KBM-7 (cell line): ENCODE measurements at regions of chr17 and their contacts with region 1.

Region 1: GRCh38 chr17:66727639-66728570 is 107.0 kb upstream of the CACNG5 start:
- DNase-seq: peak; percentile 70

Region 2: DNA sequence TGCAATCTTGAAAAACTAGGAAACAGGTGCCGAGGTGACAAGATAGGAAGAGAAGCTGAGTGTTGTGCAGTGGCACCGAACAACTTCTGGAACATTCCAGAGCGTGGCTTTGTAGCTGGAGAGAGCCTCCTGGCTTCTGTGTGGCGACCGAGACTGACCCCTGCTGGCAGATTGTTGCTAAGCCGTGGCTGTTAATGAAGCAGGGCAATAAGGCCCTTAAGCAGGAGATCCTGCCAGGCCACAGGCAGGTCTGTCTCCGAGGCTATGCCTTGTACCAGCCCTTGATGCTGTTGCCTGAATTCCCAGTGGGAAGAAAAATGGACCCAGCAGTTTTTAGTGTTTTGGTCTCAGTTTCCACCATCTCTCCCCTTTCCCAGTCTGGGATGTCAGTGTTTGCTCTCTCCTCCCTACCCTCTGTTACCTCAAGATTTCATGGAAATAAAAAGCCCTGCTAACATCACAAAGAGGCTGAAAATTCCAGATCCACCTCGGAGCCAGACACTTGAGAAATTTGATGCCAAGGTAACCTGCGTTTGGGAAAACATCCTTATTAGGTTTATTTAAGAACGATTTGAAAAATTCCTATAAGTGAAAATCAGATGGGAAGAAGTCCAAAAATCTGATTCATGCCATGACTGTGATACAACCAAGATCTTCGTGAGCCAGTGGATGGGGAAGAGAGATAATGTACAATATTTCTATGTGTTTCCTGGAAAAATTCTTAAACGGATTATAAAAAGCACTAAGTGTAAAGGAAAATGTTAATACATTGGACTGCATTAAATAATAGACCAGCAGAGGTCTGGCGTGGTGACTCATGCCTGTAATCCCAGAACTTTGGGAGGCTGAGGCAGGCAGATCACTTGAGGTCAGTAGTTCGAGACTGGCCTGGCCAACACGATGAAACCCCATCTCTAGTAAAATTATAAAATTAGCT is 160.4 kb before region 1 on chr17:
- in situ Hi-C with region 1: no loop called
- DNase-seq: peak; percentile 81

Region 3: GRCh38 chr17:66892037-66892645 is 164.2 kb after region 1 on chr17:
- in situ Hi-C with region 1: loop called (anchors 10 kb)
- DNase-seq: no peak